Activated T-helper 1 cell treated with anti-CD3 and anti-CD28 coated beads, Interleukin-12 subunit alpha, Interleukin-12 subunit beta, Interleukin-2, Interleukin-4 antibody, amounts not matched to agents 30 ng/mL and 10 ng/mL and 1 ng/mL, durations not matched to agents 14 hours and 24 hours and 36 hours (primary cell): ENCODE measurements at regions of chr9 and their contacts with region 1.

Region 1: GRCh38 chr9:122159026-122159924 is at the starts of genes MORN5 and NDUFA8:
- DNase-seq: peak; percentile 95
- H3K4me3 Mint-ChIP-seq: peak within 1 kb of the TSS; percentile 93
- H3K27ac Mint-ChIP-seq: peak within 1 kb of the TSS; percentile 87
- H3K4me1 Mint-ChIP-seq: peaks cover 35% of the 10 kb centered on the region
- H3K27me3 Mint-ChIP-seq: peaks cover 12% of the 10 kb centered on the region
- total RNA-seq, gene MORN5: not detected in 2 replicates
- total RNA-seq, gene NDUFA8: 49.6 and 51.6 TPM in 2 replicates

Region 2: GRCh38 chr9:121871431-121872025 is 287.7 kb before region 1 on chr9:
- intact Hi-C with region 1: no loop called
- DNase-seq: no peak
- H3K4me3 Mint-ChIP-seq: no peak overlapping the region
- H3K27ac Mint-ChIP-seq: no peak overlapping the region
- H3K4me1 Mint-ChIP-seq: no peaks in the 10 kb centered on the region
- H3K27me3 Mint-ChIP-seq: peaks cover 8% of the 10 kb centered on the region

Region 3: GRCh38 chr9:122213589-122214413 is 54.5 kb after region 1 on chr9:
- intact Hi-C with region 1: loop called (anchors 1 kb)
- DNase-seq: peak; percentile 59
- H3K4me3 Mint-ChIP-seq: peak overlapping the region; percentile 72
- H3K27ac Mint-ChIP-seq: no peak overlapping the region
- H3K4me1 Mint-ChIP-seq: peaks cover 18% of the 10 kb centered on the region
- H3K27me3 Mint-ChIP-seq: peaks cover 66% of the 10 kb centered on the region

Region 4: DNA sequence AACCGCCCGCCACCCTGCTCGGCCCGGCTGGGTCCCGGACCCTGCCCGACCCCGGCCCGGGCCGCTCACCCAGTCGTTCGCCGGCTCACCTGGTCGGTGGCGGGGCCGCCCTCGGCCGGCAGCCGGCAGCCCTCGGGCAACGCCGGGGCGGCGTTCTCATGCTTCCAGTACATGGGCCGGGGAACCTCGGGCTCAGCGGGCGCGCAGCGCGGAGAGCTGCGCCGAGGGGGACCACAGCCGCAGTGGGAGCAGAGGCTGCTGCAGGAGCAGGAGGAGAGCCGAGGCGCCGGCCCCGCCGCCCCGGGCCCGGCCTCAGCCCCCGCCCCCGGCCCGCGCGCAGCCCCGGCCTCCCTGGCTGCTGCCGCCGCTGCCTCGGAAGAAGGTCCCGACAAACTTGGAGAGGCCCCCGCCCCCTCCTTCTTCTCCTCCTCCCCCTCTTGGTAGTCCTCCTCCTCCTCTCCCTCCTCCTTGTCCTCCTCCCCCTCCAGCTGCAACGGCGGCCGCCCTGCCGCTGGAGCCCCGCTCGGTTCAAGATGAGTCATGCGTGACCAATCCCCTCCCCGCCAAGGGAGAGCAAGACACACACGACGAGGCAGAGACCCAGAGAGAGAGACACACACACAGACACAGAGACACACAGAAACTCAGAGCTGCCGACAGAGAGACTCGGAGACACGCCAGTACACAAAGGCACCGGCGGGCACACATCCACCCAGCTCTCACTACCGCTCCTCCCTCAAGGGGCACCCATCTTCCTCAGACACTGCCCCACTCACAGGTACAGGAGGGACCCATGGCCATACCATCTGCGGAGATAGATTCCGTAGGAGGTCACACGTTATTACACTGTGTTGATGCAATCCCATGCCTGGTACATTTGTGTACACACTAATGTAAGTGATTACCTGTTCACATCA is 69.6 kb after region 1 on chr9 and contains the start of gene LHX6:
- intact Hi-C with region 1: no loop called
- DNase-seq: no peak
- H3K4me3 Mint-ChIP-seq: no peak within 1 kb of the TSS
- H3K27ac Mint-ChIP-seq: no peak within 1 kb of the TSS
- H3K4me1 Mint-ChIP-seq: no peaks in the 10 kb centered on the region
- H3K27me3 Mint-ChIP-seq: peaks cover 32% of the 10 kb centered on the region
- total RNA-seq, gene LHX6: 0.08 TPM in 1 of 2 replicates, not detected in the other

Region 5: GRCh38 chr9:122402403-122402871 is 243.2 kb after region 1 on chr9:
- intact Hi-C with region 1: loop called (anchors 1 kb)
- DNase-seq: peak; percentile 33
- H3K4me3 Mint-ChIP-seq: peak overlapping the region; percentile 5
- H3K27ac Mint-ChIP-seq: peak overlapping the region; percentile 86
- H3K4me1 Mint-ChIP-seq: peaks cover 25% of the 10 kb centered on the region
- H3K27me3 Mint-ChIP-seq: peaks cover 6% of the 10 kb centered on the region

Region 6: GRCh38 chr9:122468735-122469134 is 309.5 kb after region 1 on chr9:
- intact Hi-C with region 1: no loop called
- DNase-seq: no peak
- H3K4me3 Mint-ChIP-seq: no peak overlapping the region
- H3K27ac Mint-ChIP-seq: no peak overlapping the region
- H3K4me1 Mint-ChIP-seq: peaks cover 15% of the 10 kb centered on the region
- H3K27me3 Mint-ChIP-seq: peaks cover 15% of the 10 kb centered on the region